ENCODE measurements at regions of chr14 and their contacts with region 1.

Region 1: DNA sequence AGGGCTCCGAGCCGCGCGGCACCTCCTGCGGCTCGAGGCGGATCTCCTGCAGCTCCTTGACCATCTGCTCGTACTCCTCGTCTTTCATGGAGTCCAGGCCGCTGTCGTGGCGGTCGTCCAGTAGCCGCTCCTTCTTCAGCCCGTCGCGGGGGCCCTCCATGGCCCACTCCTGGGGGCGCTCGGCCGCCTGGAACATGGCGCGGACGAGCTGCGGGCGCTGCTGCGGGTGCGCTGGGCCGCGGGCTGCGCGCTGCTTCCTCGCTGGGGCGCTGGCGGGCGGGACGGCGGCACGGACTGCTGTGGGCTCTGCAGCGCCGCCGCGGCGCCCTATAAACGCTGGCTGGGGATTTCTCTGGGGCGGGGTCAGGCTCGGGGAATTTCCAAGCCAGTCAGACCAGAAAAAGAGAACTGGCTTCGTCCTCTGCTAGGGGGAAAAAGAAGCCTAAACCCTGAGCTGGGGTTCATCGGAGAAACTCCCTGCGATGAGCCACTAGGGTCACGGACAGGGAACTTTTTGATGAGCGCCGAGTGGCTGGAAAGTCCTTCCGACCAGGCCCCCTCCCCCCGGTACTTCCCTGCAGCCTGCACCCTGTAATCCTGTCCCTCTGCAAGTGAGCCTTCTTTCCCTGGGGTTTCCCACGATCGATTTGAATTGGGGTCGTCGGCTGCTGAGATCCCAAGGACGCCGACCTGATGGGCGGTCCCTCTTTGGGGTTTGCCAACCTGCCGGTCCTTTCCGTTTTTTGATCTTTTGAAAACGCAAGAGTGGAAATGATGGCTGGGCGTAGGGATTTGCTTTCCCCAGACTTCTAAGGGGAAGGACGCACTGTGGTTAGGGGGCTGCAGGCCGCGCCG is at the start of gene NFKBIA:
- DNase-seq: peak; percentile 98
- ATAC-seq: peak; percentile 72
- H3K4me3 Mint-ChIP-seq: peak within 1 kb of the TSS; percentile 99
- H3K27ac Mint-ChIP-seq: peak within 1 kb of the TSS; percentile 98
- H3K4me1 Mint-ChIP-seq: peaks cover 34% of the 10 kb centered on the region
- H3K27me3 Mint-ChIP-seq: no peaks in the 10 kb centered on the region
- total RNA-seq, gene NFKBIA: 264 to 298 TPM

Region 2: DNA sequence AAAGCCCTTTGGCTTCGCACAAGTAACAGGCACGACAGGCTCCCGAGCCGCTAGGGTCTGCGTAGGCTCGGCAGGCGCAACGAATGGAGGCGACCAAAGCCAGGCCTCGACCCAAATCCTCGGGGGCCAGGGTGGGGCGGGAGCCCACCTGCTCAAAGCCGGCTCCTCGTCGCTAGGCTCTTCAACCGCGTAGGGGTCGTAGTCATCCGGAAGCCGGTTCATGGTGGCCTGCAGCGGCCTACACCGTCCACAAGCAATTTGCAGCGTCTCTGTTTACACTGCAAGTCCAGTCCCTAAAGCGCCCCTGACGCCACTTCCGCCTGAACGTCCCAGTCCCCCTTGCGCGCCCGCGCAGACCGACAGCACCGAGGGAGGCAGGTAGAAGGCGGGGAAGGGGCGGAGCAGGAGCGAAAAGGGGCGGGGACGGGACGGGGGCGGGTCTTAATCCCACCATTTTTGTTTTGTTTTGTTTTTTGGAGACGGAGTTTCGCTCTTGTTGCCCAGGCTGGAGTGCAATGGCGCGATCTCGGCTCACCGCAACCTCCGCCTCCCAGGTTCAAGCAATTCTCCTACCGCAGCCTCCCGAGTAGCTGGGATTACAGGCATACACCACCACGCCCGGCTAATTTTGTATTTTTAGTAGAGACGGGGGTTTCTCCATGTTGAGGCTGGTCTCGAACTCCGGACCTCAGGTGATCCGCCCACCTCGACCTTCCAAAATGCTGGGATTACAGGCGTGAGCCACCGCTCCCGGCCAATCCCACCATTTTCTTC is 865.1 kb before region 1 on chr14 and contains the start of gene EAPP:
- CTCF ChIA-PET with region 1: no interaction called
- POLR2A ChIA-PET with region 1: no interaction called
- intact Hi-C with region 1: loop called in 1 of 2 experiments (anchors 5 kb)
- DNase-seq: peak; percentile 98
- ATAC-seq: peak; percentile 99
- H3K4me3 Mint-ChIP-seq: peak within 1 kb of the TSS; percentile 94
- H3K27ac Mint-ChIP-seq: peak within 1 kb of the TSS; percentile 95
- H3K4me1 Mint-ChIP-seq: peaks cover 33% of the 10 kb centered on the region
- H3K27me3 Mint-ChIP-seq: no peaks in the 10 kb centered on the region
- total RNA-seq, gene EAPP: 41.6 to 49.2 TPM

Region 3: DNA sequence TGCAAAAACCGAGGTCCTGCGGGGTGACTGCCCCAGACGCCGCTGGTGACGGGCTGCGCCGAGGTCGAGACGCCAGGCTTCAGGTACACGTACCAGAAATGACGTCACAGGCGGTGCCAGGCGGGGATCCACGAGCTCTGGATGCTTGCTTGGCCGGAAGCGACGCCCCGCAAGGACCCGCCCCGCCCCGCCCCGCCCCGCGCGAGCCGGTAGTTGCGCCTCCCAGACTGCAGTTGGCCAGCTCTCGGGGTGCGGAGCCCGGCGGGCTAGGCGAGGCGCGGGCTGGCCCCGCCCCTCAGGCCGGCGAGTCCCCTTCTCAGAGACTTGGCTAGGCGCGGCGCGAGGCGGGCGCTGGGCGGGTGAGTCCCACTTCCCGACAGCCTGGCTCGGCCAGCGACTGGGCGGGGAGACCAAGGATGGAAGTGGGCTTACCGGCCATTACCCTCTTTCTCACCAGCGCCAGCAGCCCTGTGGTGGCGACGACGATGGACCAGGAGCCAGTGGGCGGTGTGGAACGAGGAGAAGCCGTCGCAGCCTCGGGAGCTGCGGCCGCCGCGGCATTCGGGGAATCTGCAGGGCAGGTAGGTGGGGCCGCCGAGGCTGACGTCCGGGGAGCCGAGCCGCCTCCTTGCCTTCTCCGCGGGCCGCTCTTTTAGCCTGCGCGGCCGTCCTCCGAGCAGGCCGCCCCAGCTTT is 358.5 kb before region 1 on chr14 and contains the start of gene FAM177A1:
- CTCF ChIA-PET with region 1: no interaction called
- POLR2A ChIA-PET with region 1: interaction called, 6 read pairs
- intact Hi-C with region 1: loop called in 1 of 2 experiments (anchors 1 kb)
- DNase-seq: peak; percentile 100
- ATAC-seq: peak; percentile 94
- H3K4me3 Mint-ChIP-seq: peak within 1 kb of the TSS; percentile 95
- H3K27ac Mint-ChIP-seq: peak within 1 kb of the TSS; percentile 99
- H3K4me1 Mint-ChIP-seq: peaks cover 23% of the 10 kb centered on the region
- H3K27me3 Mint-ChIP-seq: no peaks in the 10 kb centered on the region
- total RNA-seq, gene FAM177A1: 35.4 to 37.2 TPM

Region 4: DNA sequence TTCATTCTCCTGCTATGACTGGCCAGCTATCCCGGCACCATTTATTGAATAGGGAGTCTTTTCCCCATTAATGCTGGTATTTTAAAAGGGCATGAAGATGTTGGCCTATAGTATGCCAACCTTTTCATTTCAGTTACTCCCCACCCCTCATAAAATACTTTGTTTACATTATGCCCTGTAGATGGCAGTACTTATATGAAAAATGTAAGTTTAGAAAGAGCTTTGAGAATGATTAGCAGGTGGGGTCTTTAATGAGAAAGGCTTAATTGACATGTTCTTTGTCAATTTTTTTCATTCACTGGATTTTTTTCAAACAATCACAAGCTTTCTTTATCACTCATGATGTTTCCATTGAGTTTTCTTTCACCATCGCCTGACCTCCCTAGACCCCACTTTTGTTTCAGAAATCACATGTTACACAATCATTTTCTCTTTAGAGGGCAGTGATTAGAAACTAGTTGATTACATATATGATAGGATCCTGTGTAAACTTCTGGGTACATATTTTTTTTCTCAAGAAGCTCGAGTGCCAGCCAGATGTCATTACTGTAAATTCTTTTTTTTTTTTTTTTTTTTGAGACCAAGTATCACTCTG is 175.1 kb before region 1 on chr14:
- CTCF ChIA-PET with region 1: interaction called, 85 read pairs
- POLR2A ChIA-PET with region 1: interaction called, 5 read pairs
- intact Hi-C with region 1: loop called (anchors 1 to 2 kb)
- DNase-seq: no peak
- ATAC-seq: peak; percentile 63
- H3K4me3 Mint-ChIP-seq: no peak overlapping the region
- H3K27ac Mint-ChIP-seq: peak overlapping the region; percentile 51
- H3K4me1 Mint-ChIP-seq: peaks cover 27% of the 10 kb centered on the region
- H3K27me3 Mint-ChIP-seq: no peaks in the 10 kb centered on the region

Region 5: DNA sequence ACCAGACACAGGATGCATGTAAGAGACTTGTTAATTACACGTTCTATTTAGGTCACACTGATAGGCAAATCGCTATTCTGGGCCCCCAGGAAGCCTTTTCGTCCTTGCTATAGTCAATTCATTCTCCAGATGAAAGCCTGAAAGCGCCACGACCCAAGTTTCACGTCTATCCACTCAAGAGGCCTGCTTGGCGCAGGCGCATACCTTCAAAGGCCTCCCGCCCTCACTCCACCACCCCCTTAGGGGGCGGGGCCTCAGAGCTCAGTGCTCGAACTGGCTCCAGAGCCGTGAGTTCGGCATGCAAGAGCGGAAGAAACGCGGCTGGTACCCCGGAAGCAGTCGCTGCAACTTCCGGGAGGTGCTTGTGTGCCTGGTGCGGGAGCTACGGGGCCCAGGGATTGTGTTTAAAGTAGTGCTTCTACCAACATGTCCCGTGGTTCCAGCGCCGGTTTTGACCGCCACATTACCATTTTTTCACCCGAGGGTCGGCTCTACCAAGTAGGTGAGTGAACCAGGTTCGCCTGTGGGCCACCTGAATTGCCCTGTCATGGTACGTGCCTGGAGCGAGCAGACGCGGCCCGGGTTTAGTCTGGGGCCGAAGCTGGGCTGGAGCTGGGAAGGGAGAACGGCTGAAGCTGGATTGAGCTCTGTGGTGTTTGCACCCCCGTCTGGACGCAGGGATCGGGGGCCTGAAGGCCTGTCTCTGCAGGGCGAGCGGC is 112.5 kb before region 1 on chr14 and contains the start of gene PSMA6:
- CTCF ChIA-PET with region 1: interaction called, 31 read pairs
- POLR2A ChIA-PET with region 1: interaction called, 132 read pairs
- intact Hi-C with region 1: loop called (anchors 1 kb)
- DNase-seq: peak; percentile 100
- ATAC-seq: peak; percentile 86
- H3K4me3 Mint-ChIP-seq: peak within 1 kb of the TSS; percentile 85
- H3K27ac Mint-ChIP-seq: peak within 1 kb of the TSS; percentile 96
- H3K4me1 Mint-ChIP-seq: peaks cover 52% of the 10 kb centered on the region
- H3K27me3 Mint-ChIP-seq: no peaks in the 10 kb centered on the region
- total RNA-seq, gene PSMA6: 374 to 425 TPM

Region 6: DNA sequence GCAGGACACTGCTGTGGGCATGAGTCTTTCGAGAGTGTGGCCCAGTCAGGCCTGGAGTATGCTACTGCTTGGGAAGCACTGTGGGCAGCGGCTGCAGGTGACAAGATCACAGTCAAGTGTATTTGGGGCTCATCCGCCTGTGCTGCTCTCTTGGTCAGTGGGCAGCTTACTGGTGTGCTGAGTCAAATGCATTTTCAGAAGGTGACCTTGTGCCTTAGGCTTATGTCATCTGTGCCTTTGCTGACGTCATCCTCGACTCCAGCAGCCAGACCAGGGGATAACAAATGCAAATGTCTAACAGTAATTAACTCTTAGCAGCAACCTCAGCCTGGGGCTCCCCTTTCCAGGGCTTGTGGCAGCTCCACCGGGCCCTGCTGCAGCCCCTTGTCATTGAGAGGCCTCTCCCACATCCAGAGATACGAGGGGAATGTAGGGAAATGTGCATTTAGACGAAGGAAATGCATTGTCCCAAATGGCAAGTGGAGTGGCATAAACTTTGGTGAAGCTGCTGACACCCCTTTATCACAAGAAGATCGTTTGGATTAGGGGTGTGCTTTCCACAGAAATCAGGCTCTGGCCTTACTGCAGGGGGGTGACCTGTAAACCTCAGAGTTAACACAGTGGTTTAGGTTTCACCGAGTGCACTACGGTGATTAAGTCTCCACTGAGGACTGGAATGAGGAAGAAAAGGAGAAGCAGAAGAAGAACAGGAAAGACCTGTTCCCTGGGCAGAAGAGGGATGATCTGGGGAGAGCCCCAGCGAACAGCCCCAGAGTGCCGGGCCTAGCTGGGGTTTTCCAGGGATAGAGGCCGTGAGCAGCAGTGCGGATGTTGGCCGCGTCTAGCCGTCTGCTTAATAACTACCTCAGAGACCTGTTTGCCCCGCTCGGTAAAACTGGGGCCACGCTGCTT is 72.8 kb before region 1 on chr14:
- CTCF ChIA-PET with region 1: interaction called, 24 read pairs
- POLR2A ChIA-PET with region 1: interaction called, 85 read pairs
- intact Hi-C with region 1: loop called (anchors 1 kb)
- DNase-seq: no peak
- ATAC-seq: no peak
- H3K4me3 Mint-ChIP-seq: no peak overlapping the region
- H3K27ac Mint-ChIP-seq: peak overlapping the region; percentile 96
- H3K4me1 Mint-ChIP-seq: peaks cover 32% of the 10 kb centered on the region
- H3K27me3 Mint-ChIP-seq: no peaks in the 10 kb centered on the region

Region 7: GRCh38 chr14:35365130-35366055 is 39.3 kb before region 1 on chr14:
- CTCF ChIA-PET with region 1: interaction called, 19 read pairs
- POLR2A ChIA-PET with region 1: interaction called, 87 read pairs
- intact Hi-C with region 1: loop called (anchors 1 kb)
- DNase-seq: peak; percentile 93
- ATAC-seq: peak; percentile 96
- H3K4me3 Mint-ChIP-seq: peak overlapping the region; percentile 36
- H3K27ac Mint-ChIP-seq: peak overlapping the region; percentile 97
- H3K4me1 Mint-ChIP-seq: peaks cover 59% of the 10 kb centered on the region
- H3K27me3 Mint-ChIP-seq: no peaks in the 10 kb centered on the region

Measured in activated CD4-positive, alpha-beta T cell treated with anti-CD3 and anti-CD28 coated beads for 36 hours (primary cell).